HepG2 (cell line): ENCODE measurements at regions of chr2 and their contacts with region 1.

Region 1: DNA sequence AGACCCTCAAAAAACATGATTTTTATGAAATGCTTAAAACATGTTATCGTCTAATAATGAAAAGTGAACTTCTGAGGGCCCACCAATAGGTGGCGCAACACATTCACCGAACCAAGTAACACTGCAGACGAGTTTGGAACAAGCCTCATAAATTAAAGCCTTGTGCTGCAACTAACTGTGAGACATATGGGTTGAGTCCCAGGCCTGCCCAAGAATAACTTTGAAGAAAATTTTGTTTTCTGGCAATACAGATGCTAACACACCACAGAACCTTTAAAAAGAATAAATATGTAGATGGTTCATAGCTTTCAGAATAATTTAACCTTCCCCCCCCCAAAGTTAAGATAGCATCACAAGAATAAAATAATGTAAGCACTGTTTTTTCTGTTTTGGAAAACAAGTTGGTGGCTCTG is 285.8 kb downstream of the RNF144A start:
- DNase-seq: peak; percentile 49
- ATAC-seq: peak; percentile 77
- H3K4me3 ChIP-seq: no peak overlapping the region
- H3K27ac ChIP-seq: no peak overlapping the region
- H3K4me1 ChIP-seq: no peaks in the 10 kb centered on the region
- H3K27me3 ChIP-seq: no peaks in the 10 kb centered on the region
- CTCF ChIP-seq: peak; percentile 85
- EP300 ChIP-seq: no peak
- POLR2A ChIP-seq: no peak
- RAD21 ChIP-seq: no peak

Region 2: GRCh38 chr2:7026742-7027141 is 176.3 kb before region 1 on chr2:
- CTCF ChIA-PET with region 1: no interaction called
- POLR2A ChIA-PET with region 1: no interaction called
- in situ Hi-C with region 1: no loop called
- intact Hi-C with region 1: no loop called
- DNase-seq: no peak
- ATAC-seq: no peak
- H3K4me3 ChIP-seq: no peak overlapping the region
- H3K27ac ChIP-seq: no peak overlapping the region
- H3K4me1 ChIP-seq: peaks cover 31% of the 10 kb centered on the region
- H3K27me3 ChIP-seq: no peaks in the 10 kb centered on the region
- CTCF ChIP-seq: no peak
- EP300 ChIP-seq: no peak
- POLR2A ChIP-seq: no peak
- RAD21 ChIP-seq: no peak

Region 3: DNA sequence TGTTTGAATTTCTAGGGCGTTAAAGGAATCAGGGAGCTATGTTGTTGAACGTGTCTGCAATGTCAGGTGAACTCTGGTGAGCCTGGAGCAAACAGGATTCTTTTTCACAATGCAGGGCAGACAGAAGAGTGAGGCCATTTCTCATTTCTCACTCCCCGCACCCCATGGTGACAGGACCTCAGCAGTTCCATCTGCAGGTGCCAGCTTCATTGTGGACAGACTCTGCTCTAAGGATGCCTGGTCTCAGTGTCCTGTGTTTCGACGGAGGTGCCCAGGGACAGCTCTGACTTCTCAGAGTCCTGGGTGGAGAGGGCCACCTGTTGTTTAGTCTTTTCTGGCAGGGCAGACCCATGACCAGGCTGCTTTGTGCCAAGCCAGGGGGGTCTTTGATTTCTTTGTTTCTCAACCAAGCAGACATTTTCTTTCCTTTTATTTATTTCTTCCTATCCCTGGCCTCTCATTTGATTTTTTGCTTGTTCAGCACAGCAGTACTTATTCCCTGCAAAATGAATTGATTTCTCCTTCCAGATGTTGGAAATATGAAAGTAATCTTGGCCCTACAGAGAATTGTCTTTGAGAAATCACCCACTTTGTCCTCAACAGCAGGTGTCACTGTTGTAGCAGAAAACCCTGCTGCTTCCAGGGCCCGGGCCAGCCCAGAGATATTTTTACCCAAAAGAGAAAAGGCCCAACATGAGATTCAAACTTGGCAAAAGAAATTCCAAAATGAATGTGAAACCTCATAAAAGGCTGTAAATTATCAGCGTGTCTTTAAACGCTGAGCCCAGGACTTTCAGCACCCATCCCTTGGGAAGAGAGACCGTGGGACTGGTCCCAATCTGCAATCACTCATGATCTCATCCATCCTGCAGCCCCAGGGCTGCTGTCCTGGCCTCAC is 84.2 kb before region 1 on chr2:
- CTCF ChIA-PET with region 1: no interaction called
- POLR2A ChIA-PET with region 1: no interaction called
- in situ Hi-C with region 1: no loop called
- intact Hi-C with region 1: loop called (anchors 5 kb)
- DNase-seq: no peak
- ATAC-seq: peak; percentile 87
- H3K4me3 ChIP-seq: no peak overlapping the region
- H3K27ac ChIP-seq: no peak overlapping the region
- H3K4me1 ChIP-seq: no peaks in the 10 kb centered on the region
- H3K27me3 ChIP-seq: no peaks in the 10 kb centered on the region
- CTCF ChIP-seq: peak; percentile 65
- EP300 ChIP-seq: no peak
- POLR2A ChIP-seq: no peak
- RAD21 ChIP-seq: peak; percentile 10; the same call in 1 of the 2 replicates

Region 4: DNA sequence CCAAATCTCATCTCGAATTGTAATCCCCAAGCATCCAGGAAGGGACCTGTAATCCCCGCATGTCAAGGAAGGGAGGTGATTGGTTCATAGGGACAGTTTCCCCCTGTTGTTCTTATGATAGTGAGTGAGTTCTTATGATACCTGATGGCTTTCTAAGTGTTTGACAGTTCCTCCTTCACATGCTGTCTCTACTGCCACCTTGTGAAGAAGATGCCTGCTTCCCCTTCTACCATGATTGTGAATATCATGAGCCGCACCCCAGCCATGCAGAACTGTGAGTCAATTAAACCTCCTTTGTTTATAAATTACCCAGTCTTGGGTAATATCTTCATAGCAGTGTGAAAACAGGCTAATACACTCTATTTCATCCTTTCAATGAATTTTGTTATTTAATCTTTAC is 160.8 kb after region 1 on chr2:
- CTCF ChIA-PET with region 1: no interaction called
- POLR2A ChIA-PET with region 1: no interaction called
- in situ Hi-C with region 1: no loop called
- intact Hi-C with region 1: loop called (anchors 1 kb)
- DNase-seq: no peak
- ATAC-seq: peak; percentile 36; the same call in 1 of the 3 replicates
- H3K4me3 ChIP-seq: no peak overlapping the region
- H3K27ac ChIP-seq: no peak overlapping the region
- H3K4me1 ChIP-seq: peaks cover 5% of the 10 kb centered on the region
- H3K27me3 ChIP-seq: no peaks in the 10 kb centered on the region
- CTCF ChIP-seq: peak; percentile 56
- EP300 ChIP-seq: no peak
- POLR2A ChIP-seq: no peak
- RAD21 ChIP-seq: no peak

Region 5: GRCh38 chr2:7377916-7378569 is 175.0 kb after region 1 on chr2:
- CTCF ChIA-PET with region 1: interaction called, 14 read pairs
- POLR2A ChIA-PET with region 1: no interaction called
- in situ Hi-C with region 1: loop called (anchors 10 kb)
- intact Hi-C with region 1: loop called (anchors 1 kb)
- DNase-seq: no peak
- ATAC-seq: peak; percentile 85
- H3K4me3 ChIP-seq: no peak overlapping the region
- H3K27ac ChIP-seq: no peak overlapping the region
- H3K4me1 ChIP-seq: no peaks in the 10 kb centered on the region
- H3K27me3 ChIP-seq: peaks cover 0 to 3% of the 10 kb centered on the region in 2 experiments; a peak in 1 of 5 replicates
- CTCF ChIP-seq: no peak
- EP300 ChIP-seq: no peak
- POLR2A ChIP-seq: no peak
- RAD21 ChIP-seq: no peak

Region 6: GRCh38 chr2:7672027-7672684 is 469.1 kb after region 1 on chr2:
- CTCF ChIA-PET with region 1: interaction called, 8 read pairs
- POLR2A ChIA-PET with region 1: no interaction called
- in situ Hi-C with region 1: no loop called
- intact Hi-C with region 1: loop called (anchors 1 kb)
- DNase-seq: peak; percentile 49
- ATAC-seq: peak; percentile 83
- H3K4me3 ChIP-seq: no peak overlapping the region
- H3K27ac ChIP-seq: no peak overlapping the region
- H3K4me1 ChIP-seq: no peaks in the 10 kb centered on the region
- H3K27me3 ChIP-seq: peaks cover 0 to 5% of the 10 kb centered on the region in 2 experiments; a peak in 1 of 5 replicates
- CTCF ChIP-seq: peak; percentile 85
- EP300 ChIP-seq: no peak
- POLR2A ChIP-seq: no peak
- RAD21 ChIP-seq: peak; percentile 60